ENCODE measurements at regions of chr3 and their contacts with region 1.

Region 1: DNA sequence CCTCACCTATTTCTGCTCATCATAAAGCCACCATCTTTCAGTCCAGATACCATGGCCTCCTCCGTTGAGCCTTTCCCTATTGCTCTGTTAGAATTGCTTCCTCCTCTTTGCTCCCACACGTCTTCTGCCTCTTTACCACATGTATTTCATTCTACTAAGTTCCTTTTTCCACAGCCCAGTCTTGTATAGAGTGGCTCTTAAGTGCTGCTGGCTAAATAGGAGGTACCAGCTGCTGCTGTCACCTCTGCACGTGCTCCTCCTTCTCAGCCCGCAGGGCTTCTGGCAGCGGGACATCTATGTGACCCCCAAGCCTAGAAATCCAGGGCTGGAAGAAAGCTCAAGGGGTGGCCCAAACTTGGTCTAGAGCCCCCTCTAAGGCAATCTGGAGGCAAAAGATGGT is 38.8 kb upstream of the PLXND1 start:
- DNase-seq: peak in 2 of 3 donors; percentile 33 to 37
- H3K4me3 ChIP-seq: no peak overlapping the region
- H3K27ac ChIP-seq: no peak overlapping the region
- H3K4me1 ChIP-seq: peaks cover 0 to 6% (median 1%) of the 10 kb centered on the region in 4 experiments
- H3K27me3 ChIP-seq: no peaks in the 10 kb centered on the region

Region 2: GRCh38 chr3:129663026-129663446 is 17.7 kb after region 1 on chr3:
- CTCF ChIA-PET with region 1: no interaction called
- POLR2A ChIA-PET with region 1: no interaction called
- DNase-seq: no peak
- H3K4me3 ChIP-seq: no peak overlapping the region
- H3K27ac ChIP-seq: no peak overlapping the region
- H3K4me1 ChIP-seq: peaks cover 4 to 8% (median 6%) of the 10 kb centered on the region in 4 experiments
- H3K27me3 ChIP-seq: no peaks in the 10 kb centered on the region

Region 3: DNA sequence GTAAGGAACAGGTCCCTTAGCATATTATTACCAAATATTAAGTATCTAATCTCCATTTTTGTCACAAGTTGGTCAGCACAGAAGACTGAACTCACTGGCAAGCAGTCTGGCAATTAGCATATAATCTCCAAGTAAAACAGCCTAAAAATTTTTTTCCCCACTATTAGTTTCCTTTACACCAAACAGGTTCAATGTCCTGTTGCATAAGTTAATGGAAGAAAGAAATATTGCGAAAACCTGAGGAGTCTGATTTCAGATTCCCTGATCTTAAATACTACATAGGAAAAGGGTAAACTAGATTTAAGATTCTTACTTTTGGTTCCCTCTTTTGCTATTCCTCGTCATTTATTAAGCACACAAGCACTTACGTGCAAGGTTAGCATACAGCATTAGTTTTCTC is 94.3 kb after region 1 on chr3:
- CTCF ChIA-PET with region 1: no interaction called
- POLR2A ChIA-PET with region 1: no interaction called
- DNase-seq: no peak
- H3K4me3 ChIP-seq: no peak overlapping the region
- H3K27ac ChIP-seq: no peak overlapping the region
- H3K4me1 ChIP-seq: no peaks in the 10 kb centered on the region
- H3K27me3 ChIP-seq: no peaks in the 10 kb centered on the region

Region 4: GRCh38 chr3:129756871-129757270 is 111.6 kb after region 1 on chr3:
- CTCF ChIA-PET with region 1: no interaction called
- POLR2A ChIA-PET with region 1: no interaction called
- DNase-seq: no peak
- H3K4me3 ChIP-seq: no peak overlapping the region
- H3K27ac ChIP-seq: no peak overlapping the region
- H3K4me1 ChIP-seq: no peaks in the 10 kb centered on the region
- H3K27me3 ChIP-seq: no peaks in the 10 kb centered on the region

Region 5: DNA sequence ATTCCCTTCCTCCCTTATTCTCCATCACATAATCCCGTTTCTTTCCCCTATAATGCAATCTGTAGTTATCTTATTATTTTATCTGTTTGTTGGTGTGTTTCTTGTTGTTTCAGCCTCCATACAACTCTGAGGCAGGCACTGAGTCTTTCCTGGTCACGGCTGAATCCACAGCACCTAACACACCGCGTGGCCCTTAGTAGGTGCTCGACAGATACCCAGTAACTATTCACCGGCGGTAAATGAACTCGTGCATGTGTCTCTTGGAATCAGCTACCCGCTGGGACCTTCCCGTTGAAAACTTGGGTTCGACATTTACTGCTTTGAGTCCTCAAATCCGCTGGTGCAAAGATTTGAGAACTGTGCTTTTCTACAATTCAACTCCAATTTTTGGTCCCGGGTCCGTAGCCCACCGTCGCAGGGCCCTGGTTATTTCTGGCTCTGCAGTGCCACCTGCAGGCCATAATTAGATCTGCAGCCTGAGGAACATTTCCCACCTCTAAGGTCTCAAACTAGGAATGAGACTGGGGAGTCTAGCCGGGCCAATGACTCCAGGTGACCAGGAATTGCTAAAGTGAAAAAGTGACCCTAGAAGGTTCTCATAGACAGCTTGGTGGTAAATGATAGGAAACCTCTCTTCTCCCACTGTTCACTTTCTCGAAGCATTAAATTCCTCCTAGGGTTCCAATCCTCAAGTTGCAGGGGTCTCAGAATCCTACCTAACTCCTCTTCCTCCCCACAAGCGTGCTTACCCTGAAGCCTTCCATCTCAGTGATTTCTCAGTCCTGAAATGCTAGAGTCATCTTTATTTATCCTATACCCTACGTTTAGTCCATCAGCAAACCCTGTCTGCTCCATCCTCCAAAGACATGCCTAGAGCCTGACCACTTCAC is 289.2 kb after region 1 on chr3:
- CTCF ChIA-PET with region 1: interaction called, 12 read pairs
- POLR2A ChIA-PET with region 1: no interaction called
- DNase-seq: peak; percentile 40 to 68 (median 58)
- H3K4me3 ChIP-seq: peak overlapping the region in 2 of 7 experiments; percentile 6 to 53
- H3K27ac ChIP-seq: no peak overlapping the region
- H3K4me1 ChIP-seq: peaks cover 0 to 11% (median 1%) of the 10 kb centered on the region in 4 experiments
- H3K27me3 ChIP-seq: no peaks in the 10 kb centered on the region

Measured in common myeloid progenitor, CD34-positive (primary cell).